Transverse colon (tissue), 4 donors: ENCODE measurements at regions of chr17 and their contacts with region 1.

Region 1: DNA sequence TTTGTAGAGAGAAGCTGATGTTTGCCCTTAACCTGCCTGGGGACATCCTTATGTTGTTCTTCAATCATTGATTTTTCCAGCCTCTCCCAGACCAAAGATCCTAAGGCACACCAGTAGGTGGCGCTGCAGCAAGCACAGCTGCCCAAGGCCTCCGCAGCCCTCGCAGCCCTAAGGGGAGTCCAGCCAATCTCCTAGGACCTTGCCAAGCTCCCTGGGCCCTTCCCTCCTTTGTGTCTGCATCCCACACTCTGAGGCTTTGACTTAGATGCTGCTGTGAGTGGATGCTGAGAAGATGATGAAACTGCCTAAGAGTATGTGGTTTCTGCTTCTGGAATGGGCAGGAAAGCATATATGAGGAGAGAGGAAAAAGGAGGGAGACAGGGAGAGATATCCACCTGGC is 47.1 kb downstream of the SPACA3 start:
- DNase-seq: peak; percentile 41
- H3K4me3 ChIP-seq: no peak overlapping the region
- H3K27ac ChIP-seq: no peak overlapping the region
- H3K4me1 ChIP-seq: no peaks in the 10 kb centered on the region
- H3K27me3 ChIP-seq: peaks cover 23% of the 10 kb centered on the region
- CTCF ChIP-seq: peak; percentile 43 to 61 (median 52)
- EP300 ChIP-seq: no peak
- POLR2A ChIP-seq: no peak

Region 2: DNA sequence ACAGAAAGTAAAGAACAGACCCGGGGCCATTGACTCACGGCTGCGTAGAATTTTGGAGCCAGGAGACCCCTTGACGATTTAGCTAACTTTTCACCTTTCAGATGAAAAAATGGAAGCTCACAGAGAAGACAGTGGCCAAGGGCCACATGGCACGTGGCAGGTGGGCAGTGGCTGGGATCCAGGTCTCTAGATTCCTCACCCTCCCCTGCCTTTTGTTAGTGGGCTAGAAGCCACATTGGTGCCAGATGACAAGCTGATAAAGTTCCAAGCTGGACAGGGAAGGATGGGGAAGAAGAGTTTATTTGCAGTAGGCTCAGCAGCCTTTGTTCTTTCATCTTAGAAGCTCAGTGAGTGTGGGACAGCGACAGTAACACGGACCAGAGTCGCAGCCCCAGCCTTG is 58.7 kb after region 1 on chr17:
- in situ Hi-C with region 1: no loop called
- intact Hi-C with region 1: no loop called
- DNase-seq: no peak
- H3K4me3 ChIP-seq: no peak overlapping the region
- H3K27ac ChIP-seq: no peak overlapping the region
- H3K4me1 ChIP-seq: no peaks in the 10 kb centered on the region
- H3K27me3 ChIP-seq: peaks cover 13% of the 10 kb centered on the region
- CTCF ChIP-seq: no peak
- EP300 ChIP-seq: no peak
- POLR2A ChIP-seq: no peak

Region 3: DNA sequence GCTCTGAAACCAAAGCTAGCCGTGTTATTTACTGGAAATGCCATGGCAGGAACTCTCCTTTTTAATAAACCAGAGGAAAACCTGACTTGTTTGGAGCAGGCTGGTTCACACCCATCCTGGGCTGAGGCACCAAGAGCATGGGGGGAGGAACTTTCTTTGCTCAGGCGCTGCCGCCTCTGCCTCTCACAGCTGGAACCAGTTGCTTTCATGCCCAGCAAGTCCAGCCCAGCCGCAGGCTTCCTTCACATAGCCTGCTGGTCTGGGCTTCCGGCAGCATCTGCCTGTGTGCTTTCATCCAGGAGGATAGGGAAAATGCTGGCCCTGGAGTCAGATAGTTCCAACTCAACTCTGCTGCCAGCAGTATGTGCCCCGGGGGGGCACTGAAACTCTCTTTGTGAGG is 342.5 kb after region 1 on chr17:
- in situ Hi-C with region 1: no loop called
- intact Hi-C with region 1: loop called (anchors 10 kb)
- DNase-seq: no peak
- H3K4me3 ChIP-seq: no peak overlapping the region
- H3K27ac ChIP-seq: no peak overlapping the region
- H3K4me1 ChIP-seq: peaks cover 0 to 4% (median 0%) of the 10 kb centered on the region in 4 donors
- H3K27me3 ChIP-seq: no peaks in the 10 kb centered on the region
- CTCF ChIP-seq: no peak
- EP300 ChIP-seq: no peak
- POLR2A ChIP-seq: no peak